Heart left ventricle (tissue), 16 donors: ENCODE measurements at regions of chr5 and their contacts with region 1.

Region 1: DNA sequence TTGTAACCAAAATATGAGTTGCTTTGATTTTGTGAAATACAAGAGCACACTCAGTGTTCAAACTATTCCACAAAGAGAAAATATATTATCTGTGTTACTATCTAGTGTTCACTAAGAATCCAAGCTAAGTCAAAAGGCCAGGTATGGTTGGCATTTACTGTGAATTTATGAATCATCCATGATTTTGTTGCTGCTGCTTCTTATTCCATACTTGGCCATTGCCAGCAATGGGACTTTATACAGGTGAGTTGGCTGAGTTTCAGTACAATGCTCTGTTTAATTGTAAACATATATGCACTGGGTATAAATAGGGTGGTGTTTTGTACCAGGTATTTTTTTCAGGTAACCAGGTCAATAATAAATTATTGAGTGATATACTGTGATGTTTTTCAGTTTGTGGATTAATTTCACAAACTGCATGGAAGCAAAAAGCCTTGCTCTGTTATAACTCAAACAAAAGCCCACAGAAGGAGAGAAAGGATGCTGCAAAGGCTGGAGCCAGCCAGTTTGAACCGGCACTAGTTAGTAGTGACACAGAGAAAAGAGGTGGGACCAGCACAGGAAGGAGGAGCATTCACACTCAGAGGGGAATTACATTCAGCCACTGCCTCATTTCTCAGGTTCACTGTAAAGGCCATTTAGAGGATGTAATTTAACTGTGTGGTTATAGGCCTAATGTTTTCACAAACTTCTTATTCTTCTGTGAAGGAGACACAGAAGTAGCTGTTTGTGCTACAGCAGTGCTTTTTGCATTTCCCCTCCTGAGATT is 381.8 kb downstream of the ADGRV1 start:
- DNase-seq: no peak
- ATAC-seq: peak in 1 of 4 donors; percentile 52
- H3K4me3 ChIP-seq: no peak overlapping the region
- H3K27ac ChIP-seq: peak overlapping the region in 1 of 12 donors; percentile 40
- H3K4me1 ChIP-seq: peaks cover 0 to 5% (median 0%) of the 10 kb centered on the region in 12 donors
- H3K27me3 ChIP-seq: no peaks in the 10 kb centered on the region
- CTCF ChIP-seq: no peak
- POLR2A ChIP-seq: no peak

Region 2: GRCh38 chr5:90424245-90424644 is 516.2 kb before region 1 on chr5:
- intact Hi-C with region 1: no loop called
- DNase-seq: no peak
- ATAC-seq: no peak
- H3K4me3 ChIP-seq: no peak overlapping the region
- H3K27ac ChIP-seq: no peak overlapping the region
- H3K4me1 ChIP-seq: no peaks in the 10 kb centered on the region
- H3K27me3 ChIP-seq: no peaks in the 10 kb centered on the region
- CTCF ChIP-seq: no peak
- POLR2A ChIP-seq: no peak

Region 3: GRCh38 chr5:91074615-91075014 is 134.2 kb after region 1 on chr5:
- intact Hi-C with region 1: loop called in 1 of 10 experiments (anchors 10 kb)
- DNase-seq: no peak
- ATAC-seq: no peak
- H3K4me3 ChIP-seq: no peak overlapping the region
- H3K27ac ChIP-seq: no peak overlapping the region
- H3K4me1 ChIP-seq: peaks cover 0 to 4% (median 0%) of the 10 kb centered on the region in 12 donors
- H3K27me3 ChIP-seq: no peaks in the 10 kb centered on the region
- CTCF ChIP-seq: no peak
- POLR2A ChIP-seq: no peak

Region 4: DNA sequence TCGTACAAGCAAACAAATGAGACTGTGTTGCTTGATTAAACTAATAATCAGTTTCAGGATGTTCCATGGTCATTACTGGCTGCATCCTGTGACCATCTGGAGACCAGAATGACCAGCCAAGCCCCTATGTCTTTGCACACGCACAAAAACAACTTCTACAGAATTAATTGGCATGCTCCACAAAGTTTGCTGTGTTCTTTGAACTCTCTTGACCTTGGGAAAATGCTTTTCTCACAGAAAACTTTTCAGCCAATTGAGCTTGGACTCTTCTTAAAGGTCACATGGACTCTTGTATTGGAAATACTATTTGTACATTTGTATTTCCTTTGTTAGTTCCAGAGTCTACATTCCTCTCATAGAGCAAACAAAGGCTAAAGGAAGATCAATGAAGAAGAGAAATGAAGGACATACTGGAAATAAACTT is 294.9 kb after region 1 on chr5:
- intact Hi-C with region 1: loop called in 1 of 10 experiments (anchors 5 kb)
- DNase-seq: peak in 1 of 5 donors; percentile 20
- ATAC-seq: peak in 3 of 4 donors; percentile 18 to 64 (median 57)
- H3K4me3 ChIP-seq: no peak overlapping the region
- H3K27ac ChIP-seq: peak overlapping the region in 5 of 12 donors; percentile 1 to 71 (median 28)
- H3K4me1 ChIP-seq: peaks cover 0 to 11% (median 0%) of the 10 kb centered on the region in 12 donors
- H3K27me3 ChIP-seq: no peaks in the 10 kb centered on the region
- CTCF ChIP-seq: no peak
- POLR2A ChIP-seq: no peak